Cardiac septum (tissue), 1 donor: ENCODE measurements at regions of chr1 and their contacts with region 1.

Region 1: DNA sequence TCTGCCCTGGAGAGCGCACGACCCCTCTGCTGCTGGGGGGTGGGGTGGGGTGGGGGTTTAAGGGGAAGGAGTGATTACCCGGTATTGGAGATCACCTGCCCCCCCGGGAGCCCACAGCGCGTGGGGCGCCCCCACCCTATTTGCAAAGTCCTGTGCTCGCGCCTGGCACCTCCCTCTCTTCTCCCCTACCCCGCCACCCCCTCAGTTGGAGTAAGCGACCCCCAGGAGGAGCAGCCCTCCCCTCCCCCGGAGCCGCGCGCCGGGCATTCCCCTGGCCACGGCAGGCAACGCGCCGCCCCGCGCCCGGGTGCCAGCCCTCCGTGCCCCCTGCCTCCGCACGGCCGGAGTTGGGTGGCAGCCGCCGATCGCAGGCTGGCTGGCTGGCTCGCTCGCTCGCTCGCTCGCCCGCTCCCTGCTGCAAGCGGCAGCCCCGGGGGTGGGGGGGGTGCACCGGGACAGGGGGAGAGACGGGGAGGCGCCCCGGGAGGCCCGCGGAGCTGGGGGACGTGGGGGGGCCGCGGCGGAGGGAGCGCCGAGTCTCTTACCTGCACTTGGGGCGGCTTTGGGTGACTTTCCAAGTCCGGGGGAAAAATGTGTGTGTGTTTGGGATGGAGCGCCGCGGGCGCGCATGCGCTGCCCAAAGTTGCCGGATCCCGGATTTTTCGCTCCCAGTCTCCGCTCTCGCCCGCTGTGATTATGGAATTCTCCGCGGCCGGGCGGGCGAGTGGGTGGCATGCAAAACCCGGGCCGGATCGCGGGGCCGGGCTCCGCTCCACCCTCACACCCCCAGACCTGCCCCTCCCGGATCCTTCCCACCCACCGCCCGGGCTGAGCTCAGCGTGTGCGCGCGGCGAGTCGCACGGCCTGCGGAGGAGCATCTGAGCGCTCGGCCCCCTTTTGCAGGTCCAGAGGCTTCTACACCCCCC is at the start of gene CASZ1:
- DNase-seq: peak; percentile 85
- total RNA-seq, gene CASZ1: 82.0 TPM

Region 2: GRCh38 chr1:10679496-10680220 is 116.6 kb before region 1 on chr1:
- intact Hi-C with region 1: loop called (anchors 2 kb)
- DNase-seq: no peak